Left lung (tissue), 14 donors: ENCODE measurements at regions of chr3 and their contacts with region 1.

Region 1: GRCh38 chr3:113495035-113495434 is 19.9 kb downstream of the SPICE1 start:
- DNase-seq: peak in 1 of 4 donors; percentile 31
- ATAC-seq: peak; percentile 83
- H3K4me3 ChIP-seq: no peak overlapping the region
- H3K27ac ChIP-seq: no peak overlapping the region
- H3K4me1 ChIP-seq: no peaks in the 10 kb centered on the region
- H3K27me3 ChIP-seq: no peaks in the 10 kb centered on the region
- CTCF ChIP-seq: peak in 1 of 2 donors; percentile 35

Region 2: DNA sequence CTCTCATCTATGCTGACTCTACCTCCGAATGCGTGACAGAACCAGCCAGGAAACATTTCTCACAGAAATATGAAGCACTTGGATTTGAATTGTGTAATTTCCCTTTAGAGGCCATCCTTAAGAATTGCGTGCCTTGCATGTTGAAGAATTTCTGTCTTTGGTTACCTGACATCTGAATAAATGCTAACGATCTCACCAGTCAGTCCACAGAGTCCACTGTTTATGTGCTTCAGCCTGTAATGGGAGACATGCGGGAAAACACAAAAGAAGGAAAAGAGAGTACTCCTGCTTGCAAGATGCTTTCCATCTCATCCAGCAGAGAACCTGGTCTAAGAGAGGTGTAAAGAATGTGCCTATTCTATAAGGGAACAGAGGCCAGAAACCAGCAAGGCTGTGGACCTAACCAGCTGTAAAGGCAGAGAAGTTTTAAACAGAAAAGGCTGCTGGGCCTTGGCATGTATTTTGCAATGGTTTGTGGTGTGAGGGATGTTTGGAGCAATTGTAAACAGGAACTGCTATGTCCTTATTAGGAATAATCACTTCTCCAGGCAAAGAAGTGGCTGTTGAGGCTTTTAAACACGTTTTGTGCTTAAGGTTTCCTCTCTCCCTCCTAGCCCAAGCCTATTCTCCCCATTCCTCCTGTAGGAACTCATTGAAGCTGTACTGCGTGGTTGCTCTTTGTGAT is 320.1 kb before region 1 on chr3:
- intact Hi-C with region 1: no loop called
- DNase-seq: peak in 1 of 4 donors; percentile 76
- ATAC-seq: peak; percentile 29
- H3K4me3 ChIP-seq: no peak overlapping the region
- H3K27ac ChIP-seq: no peak overlapping the region
- H3K4me1 ChIP-seq: no peaks in the 10 kb centered on the region
- H3K27me3 ChIP-seq: no peaks in the 10 kb centered on the region
- CTCF ChIP-seq: no peak

Region 3: DNA sequence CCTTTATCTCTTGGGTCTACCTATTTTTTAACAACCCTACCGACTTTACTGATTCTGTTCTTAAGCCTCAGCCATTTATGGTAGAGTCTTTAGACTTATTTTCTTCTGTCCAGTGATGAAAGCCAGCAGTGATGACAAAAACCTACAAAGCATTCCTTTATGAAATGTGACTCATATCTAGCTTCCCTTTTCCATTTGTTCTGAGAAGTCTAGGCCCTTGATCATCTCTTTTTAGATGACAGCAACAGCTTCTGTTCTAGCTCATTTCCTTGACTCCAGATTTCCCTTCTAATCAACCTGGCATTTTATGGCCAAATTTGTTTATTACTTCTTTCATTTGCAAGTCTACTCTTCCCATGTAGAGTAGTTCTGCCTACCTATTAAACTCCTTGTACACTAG is 89.9 kb before region 1 on chr3:
- intact Hi-C with region 1: no loop called
- DNase-seq: no peak
- ATAC-seq: no peak
- H3K4me3 ChIP-seq: no peak overlapping the region
- H3K27ac ChIP-seq: no peak overlapping the region
- H3K4me1 ChIP-seq: no peaks in the 10 kb centered on the region
- H3K27me3 ChIP-seq: no peaks in the 10 kb centered on the region
- CTCF ChIP-seq: no peak

Region 4: GRCh38 chr3:113575206-113575605 is 80.2 kb after region 1 on chr3:
- intact Hi-C with region 1: loop called in 1 of 2 experiments (anchors 10 kb)
- DNase-seq: no peak
- ATAC-seq: no peak
- H3K4me3 ChIP-seq: no peak overlapping the region
- H3K27ac ChIP-seq: no peak overlapping the region
- H3K4me1 ChIP-seq: peaks cover 0 to 4% of the 10 kb centered on the region in 2 donors
- H3K27me3 ChIP-seq: no peaks in the 10 kb centered on the region
- CTCF ChIP-seq: no peak

Region 5: DNA sequence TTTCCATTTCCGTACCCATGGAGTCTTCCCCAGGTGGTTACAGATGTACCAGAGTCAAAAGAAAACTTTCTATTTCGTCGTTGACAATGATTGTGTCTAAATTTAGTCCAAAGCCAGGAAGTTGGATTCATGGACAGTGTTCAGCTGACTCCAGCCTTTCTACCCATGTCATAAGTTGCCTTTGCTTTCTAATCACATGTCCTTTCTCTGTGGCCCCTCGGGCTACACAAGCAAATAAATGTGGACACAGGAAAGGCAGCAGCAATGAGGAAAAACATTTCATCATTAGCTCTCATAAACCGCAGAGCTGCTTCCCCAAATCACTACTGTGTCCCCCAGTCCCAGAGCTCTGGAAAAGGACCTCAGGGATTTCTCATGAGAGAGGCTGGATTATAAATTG is 119.4 kb after region 1 on chr3:
- intact Hi-C with region 1: loop called in 1 of 2 experiments (anchors 10 kb)
- DNase-seq: no peak
- ATAC-seq: peak; percentile 54
- H3K4me3 ChIP-seq: no peak overlapping the region
- H3K27ac ChIP-seq: peak overlapping the region in 1 of 2 donors; percentile 58
- H3K4me1 ChIP-seq: peaks cover 0 to 5% of the 10 kb centered on the region in 2 donors
- H3K27me3 ChIP-seq: no peaks in the 10 kb centered on the region
- CTCF ChIP-seq: no peak

Region 6: DNA sequence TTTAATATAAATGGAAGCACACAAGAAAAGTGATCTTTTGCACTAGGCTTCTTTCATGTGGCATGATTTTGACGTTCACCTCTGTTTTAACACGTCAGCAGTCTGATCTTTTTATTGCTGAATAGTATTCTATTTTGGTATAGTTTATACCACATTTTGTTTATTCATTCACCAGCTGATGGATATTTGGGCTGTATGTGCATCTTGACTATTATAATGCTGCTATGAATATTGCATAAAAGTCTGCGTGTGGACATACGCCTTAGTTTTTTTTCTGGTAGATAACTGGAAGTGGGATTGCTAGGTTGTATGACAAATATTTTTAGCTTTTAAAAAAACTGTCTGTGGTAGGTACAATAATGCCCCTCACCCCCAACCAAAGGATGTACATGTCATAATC is 236.7 kb after region 1 on chr3:
- intact Hi-C with region 1: no loop called
- DNase-seq: no peak
- ATAC-seq: no peak
- H3K4me3 ChIP-seq: no peak overlapping the region
- H3K27ac ChIP-seq: no peak overlapping the region
- H3K4me1 ChIP-seq: peaks cover 0 to 7% of the 10 kb centered on the region in 2 donors
- H3K27me3 ChIP-seq: no peaks in the 10 kb centered on the region
- CTCF ChIP-seq: no peak